ENCODE measurements at regions of chr3 and their contacts with region 1.

Region 1: GRCh38 chr3:179181021-179181472 is 32.9 kb downstream of the PIK3CA start:
- DNase-seq: no peak
- ATAC-seq: peak; percentile 58
- H3K4me3 Mint-ChIP-seq: no peak overlapping the region
- H3K27ac Mint-ChIP-seq: no peak overlapping the region
- H3K4me1 Mint-ChIP-seq: peaks cover 42% of the 10 kb centered on the region
- H3K27me3 Mint-ChIP-seq: no peaks in the 10 kb centered on the region
- CTCF ChIP-seq: no peak

Region 2: DNA sequence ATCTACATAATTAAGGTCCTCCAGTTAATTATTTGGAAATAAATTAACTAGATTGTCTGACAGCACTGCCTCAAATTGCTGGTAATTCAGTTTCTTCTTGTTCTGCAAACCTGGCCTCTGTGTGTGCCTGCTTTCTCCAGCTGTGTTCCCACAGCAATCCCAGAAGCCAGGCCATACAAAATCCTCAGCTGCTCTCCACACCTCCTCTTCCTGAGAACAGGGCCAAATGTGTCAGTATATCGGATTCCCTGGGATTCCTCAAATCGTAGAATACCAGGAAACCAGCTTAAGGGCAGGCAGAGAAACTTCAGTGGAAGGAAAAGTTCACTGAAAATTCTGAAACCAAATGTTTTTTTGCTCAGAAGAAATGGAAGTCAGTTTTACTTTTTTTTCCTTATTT is 370.9 kb before region 1 on chr3:
- CTCF ChIA-PET with region 1: no interaction called
- POLR2A ChIA-PET with region 1: no interaction called
- intact Hi-C with region 1: no loop called
- DNase-seq: no peak
- ATAC-seq: no peak
- H3K4me3 Mint-ChIP-seq: no peak overlapping the region
- H3K27ac Mint-ChIP-seq: no peak overlapping the region
- H3K4me1 Mint-ChIP-seq: no peaks in the 10 kb centered on the region
- H3K27me3 Mint-ChIP-seq: no peaks in the 10 kb centered on the region
- CTCF ChIP-seq: no peak

Region 3: GRCh38 chr3:179166561-179167201 is 14.4 kb before region 1 on chr3:
- CTCF ChIA-PET with region 1: no interaction called
- POLR2A ChIA-PET with region 1: interaction called, 3 read pairs
- intact Hi-C with region 1: loop called (anchors 2 kb)
- DNase-seq: no peak
- ATAC-seq: no peak
- H3K4me3 Mint-ChIP-seq: peak overlapping the region; percentile 35
- H3K27ac Mint-ChIP-seq: no peak overlapping the region
- H3K4me1 Mint-ChIP-seq: peaks cover 74% of the 10 kb centered on the region
- H3K27me3 Mint-ChIP-seq: no peaks in the 10 kb centered on the region
- CTCF ChIP-seq: no peak

Region 4: GRCh38 chr3:179196098-179196497 is 15.1 kb after region 1 on chr3:
- CTCF ChIA-PET with region 1: interaction called, 3 read pairs
- POLR2A ChIA-PET with region 1: no interaction called
- intact Hi-C with region 1: loop called (anchors 2 kb)
- DNase-seq: no peak
- ATAC-seq: peak; percentile 25
- H3K4me3 Mint-ChIP-seq: no peak overlapping the region
- H3K27ac Mint-ChIP-seq: no peak overlapping the region
- H3K4me1 Mint-ChIP-seq: peaks cover 47% of the 10 kb centered on the region
- H3K27me3 Mint-ChIP-seq: no peaks in the 10 kb centered on the region
- CTCF ChIP-seq: no peak